ENCODE measurements at regions of chr12 and their contacts with region 1.

Region 1: DNA sequence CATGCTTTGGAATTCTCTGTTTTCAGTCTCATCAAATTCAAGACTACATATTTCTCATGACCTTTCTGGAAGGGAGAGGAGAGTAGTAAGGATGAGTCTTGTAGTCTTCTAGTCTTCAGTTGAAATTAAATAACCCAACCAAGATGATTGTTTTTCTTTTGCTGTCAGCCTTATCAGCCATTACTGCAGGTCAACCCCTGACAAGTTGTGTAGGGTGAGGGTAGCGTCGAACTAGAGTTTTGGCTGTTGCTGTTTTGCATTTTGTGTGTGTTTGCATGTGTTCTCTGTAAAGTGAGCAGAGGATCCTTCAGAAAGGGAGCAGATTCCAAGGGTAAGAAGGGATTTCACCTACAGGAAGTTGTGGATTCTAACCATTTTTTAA is 28.4 kb downstream of the DIP2B start:
- DNase-seq: no peak
- ATAC-seq: peak; percentile 11
- H3K4me3 Mint-ChIP-seq: no peak overlapping the region
- H3K27ac Mint-ChIP-seq: no peak overlapping the region
- H3K4me1 Mint-ChIP-seq: peaks cover 31% of the 10 kb centered on the region
- H3K27me3 Mint-ChIP-seq: no peaks in the 10 kb centered on the region

Region 2: DNA sequence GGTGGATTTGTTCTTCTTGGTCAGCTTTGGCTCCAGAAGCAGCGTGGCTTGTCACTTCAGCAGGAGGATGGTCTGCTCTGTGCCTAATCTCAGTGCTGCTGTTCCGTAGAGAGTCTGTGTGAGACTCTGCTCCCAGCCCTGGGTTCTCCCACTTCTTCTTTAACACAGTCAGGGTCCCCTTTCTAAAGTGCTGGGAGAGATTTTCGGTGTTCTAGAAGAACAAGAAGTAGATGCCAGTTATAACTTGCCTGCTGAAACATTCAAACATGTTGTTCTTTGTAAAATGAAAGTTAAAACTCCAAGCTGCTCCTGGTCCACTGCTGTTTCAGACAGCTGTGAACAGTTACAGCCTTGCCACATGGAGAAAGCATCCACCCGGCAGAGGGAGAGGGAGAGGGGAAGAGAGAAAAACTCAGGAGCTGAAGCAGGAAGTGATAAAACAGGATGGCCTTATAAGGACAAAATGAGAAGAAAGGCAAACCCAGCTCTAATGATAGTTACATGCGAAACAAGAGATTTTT is 310.9 kb before region 1 on chr12:
- CTCF ChIA-PET with region 1: no interaction called
- POLR2A ChIA-PET with region 1: no interaction called
- intact Hi-C with region 1: loop called in 1 of 2 experiments (anchors 5 kb)
- DNase-seq: peak; percentile 48
- ATAC-seq: peak; percentile 21
- H3K4me3 Mint-ChIP-seq: no peak overlapping the region
- H3K27ac Mint-ChIP-seq: no peak overlapping the region
- H3K4me1 Mint-ChIP-seq: peaks cover 40% of the 10 kb centered on the region
- H3K27me3 Mint-ChIP-seq: no peaks in the 10 kb centered on the region

Region 3: GRCh38 chr12:50517456-50518048 is 15.6 kb before region 1 on chr12:
- CTCF ChIA-PET with region 1: interaction called, 13 read pairs
- POLR2A ChIA-PET with region 1: interaction called, 7 read pairs
- intact Hi-C with region 1: loop called (anchors 1 kb)
- DNase-seq: no peak
- ATAC-seq: peak; percentile 89
- H3K4me3 Mint-ChIP-seq: no peak overlapping the region
- H3K27ac Mint-ChIP-seq: no peak overlapping the region
- H3K4me1 Mint-ChIP-seq: peaks cover 37% of the 10 kb centered on the region
- H3K27me3 Mint-ChIP-seq: no peaks in the 10 kb centered on the region

Region 4: DNA sequence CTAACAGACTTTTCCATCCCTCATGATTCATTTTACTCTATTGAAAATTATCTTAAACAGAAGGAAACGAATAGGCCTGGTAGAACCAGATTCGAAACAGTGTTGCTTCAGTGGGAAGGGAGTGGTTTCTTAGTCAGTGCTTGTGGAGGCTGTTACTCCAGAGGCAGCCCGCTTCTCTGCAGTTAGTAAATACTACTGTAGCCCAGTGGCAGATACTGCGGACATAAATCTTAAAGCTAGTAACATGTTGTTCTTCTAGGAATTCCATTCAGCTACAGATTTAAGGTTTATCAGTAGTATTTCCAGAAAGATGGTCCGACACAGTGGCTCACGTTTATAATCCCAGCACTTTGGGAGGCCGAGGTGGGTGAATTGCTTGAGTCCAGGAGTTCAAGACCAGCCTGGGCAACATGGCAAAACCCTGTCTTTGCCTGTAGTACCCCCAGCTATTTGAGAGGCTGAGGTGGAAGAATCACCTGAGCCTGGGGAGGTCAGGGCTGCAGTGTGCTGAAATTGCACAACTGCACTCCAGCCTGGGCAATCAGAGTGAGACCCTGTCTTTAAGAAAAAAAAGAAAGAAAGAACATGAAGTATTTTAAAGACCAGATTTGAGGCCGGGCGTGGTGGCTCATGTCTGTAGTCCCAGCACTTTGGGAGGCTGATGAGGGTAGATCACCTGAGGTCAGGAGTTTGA is 17.5 kb after region 1 on chr12:
- CTCF ChIA-PET with region 1: interaction called, 5 read pairs
- POLR2A ChIA-PET with region 1: interaction called, 3 read pairs
- intact Hi-C with region 1: loop called (anchors 1 kb)
- DNase-seq: no peak
- ATAC-seq: no peak
- H3K4me3 Mint-ChIP-seq: no peak overlapping the region
- H3K27ac Mint-ChIP-seq: no peak overlapping the region
- H3K4me1 Mint-ChIP-seq: peaks cover 66% of the 10 kb centered on the region
- H3K27me3 Mint-ChIP-seq: no peaks in the 10 kb centered on the region

Region 5: GRCh38 chr12:50597200-50598195 is 64.3 kb after region 1 on chr12:
- CTCF ChIA-PET with region 1: interaction called, 3 read pairs
- POLR2A ChIA-PET with region 1: no interaction called
- intact Hi-C with region 1: loop called (anchors 5 kb)
- DNase-seq: peak; percentile 78
- ATAC-seq: peak; percentile 100
- H3K4me3 Mint-ChIP-seq: peak overlapping the region; percentile 44
- H3K27ac Mint-ChIP-seq: peak overlapping the region; percentile 90
- H3K4me1 Mint-ChIP-seq: peaks cover 45% of the 10 kb centered on the region
- H3K27me3 Mint-ChIP-seq: no peaks in the 10 kb centered on the region

Region 6: DNA sequence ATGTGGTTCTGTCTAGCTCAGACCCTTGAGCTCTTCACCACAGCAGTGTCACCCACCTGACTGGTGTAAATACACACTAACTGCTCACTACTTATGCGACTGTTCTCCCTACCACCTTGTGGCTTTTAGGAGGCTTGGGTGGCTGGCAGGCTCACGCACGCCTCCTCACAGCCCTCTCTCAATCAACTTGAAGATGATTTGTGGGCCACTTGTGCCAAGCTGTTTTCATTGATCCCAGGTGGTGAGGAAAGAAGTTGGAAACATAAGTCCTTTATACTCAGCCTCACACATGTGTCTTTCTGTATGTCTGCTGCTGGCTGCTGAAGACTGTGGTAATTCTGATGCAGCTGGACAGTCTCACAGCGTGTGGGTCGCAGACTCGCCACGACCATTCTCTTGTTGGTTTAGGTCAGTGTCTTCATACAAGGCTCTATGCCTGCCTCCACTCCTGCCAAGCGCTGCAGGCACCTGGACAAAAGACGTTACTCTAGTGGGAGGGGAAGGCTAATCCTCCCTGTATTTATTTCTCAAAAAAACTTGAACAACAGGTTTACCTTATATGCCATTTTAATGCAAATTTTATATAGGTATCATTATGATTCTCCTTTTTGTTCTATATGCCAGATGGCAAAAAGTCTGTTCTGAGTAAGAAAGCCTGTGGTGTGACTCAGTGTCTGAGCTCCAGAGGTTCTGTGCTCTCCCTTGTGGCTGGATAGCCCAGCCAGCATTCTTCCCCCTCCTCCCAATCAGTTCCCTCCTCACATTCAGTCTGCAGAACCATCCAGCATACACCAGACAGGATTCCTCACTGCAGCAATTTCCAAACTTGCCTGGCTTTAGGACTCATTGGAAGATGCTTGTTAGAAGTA is 87.1 kb after region 1 on chr12:
- CTCF ChIA-PET with region 1: interaction called, 3 read pairs
- POLR2A ChIA-PET with region 1: no interaction called
- intact Hi-C with region 1: loop called in 1 of 2 experiments (anchors 5 kb)
- DNase-seq: peak; percentile 59
- ATAC-seq: peak; percentile 86
- H3K4me3 Mint-ChIP-seq: no peak overlapping the region
- H3K27ac Mint-ChIP-seq: peak overlapping the region; percentile 86
- H3K4me1 Mint-ChIP-seq: peaks cover 64% of the 10 kb centered on the region
- H3K27me3 Mint-ChIP-seq: no peaks in the 10 kb centered on the region

Measured in activated CD4-positive, alpha-beta T cell treated with anti-CD3 and anti-CD28 coated beads for 36 hours (primary cell).